ENCODE measurements at regions of chr3 and their contacts with region 1.

Region 1: DNA sequence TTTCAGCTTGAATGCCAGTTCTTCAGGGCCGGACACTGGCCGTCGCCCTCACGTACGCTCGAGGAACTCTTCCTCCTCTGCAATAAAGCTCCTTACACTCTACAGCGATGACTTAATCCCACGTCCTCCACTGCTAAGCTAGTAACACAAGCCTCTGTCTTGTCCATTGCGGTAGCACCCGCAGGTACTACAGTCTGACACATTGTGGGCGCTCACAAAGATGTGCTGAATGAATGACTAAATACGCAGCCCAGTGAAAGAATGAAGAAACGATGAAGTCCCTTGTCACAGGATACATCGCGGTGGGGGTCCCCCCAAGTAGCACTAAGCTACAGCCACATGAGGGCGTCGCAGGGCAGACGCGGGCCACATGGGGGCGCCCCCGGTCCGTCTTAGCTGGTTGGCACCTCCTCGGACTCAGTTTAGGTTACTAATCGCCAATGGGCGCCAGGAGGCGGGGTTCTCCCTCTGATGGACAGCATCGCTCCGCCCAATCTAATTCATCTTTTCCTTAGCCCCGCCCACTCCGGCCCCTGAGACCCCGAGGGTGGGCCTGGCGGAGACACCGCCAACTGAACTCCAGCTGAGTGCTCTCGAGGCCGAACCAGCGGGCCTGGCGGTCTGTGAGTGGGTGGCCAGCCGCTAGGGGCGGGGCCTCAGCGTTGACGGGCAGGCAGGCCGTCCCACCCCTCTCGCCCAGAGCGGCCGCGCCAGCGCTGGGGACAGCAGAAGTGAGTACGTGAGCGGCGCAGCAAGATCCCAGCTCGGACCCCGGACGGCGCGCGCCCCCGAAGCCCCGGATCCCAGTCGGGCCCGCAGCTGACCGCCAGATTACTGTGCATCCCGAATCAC is at the start of gene EPHB3:
- DNase-seq: peak; percentile 82
- ATAC-seq: peak; percentile 96
- H3K4me3 ChIP-seq: peak within 1 kb of the TSS; percentile 55 to 60
- H3K27ac ChIP-seq: no peak within 1 kb of the TSS
- H3K4me1 ChIP-seq: peaks cover 18% of the 10 kb centered on the region
- H3K27me3 ChIP-seq: peaks cover 2% of the 10 kb centered on the region; the same call in 1 of the 2 replicates
- CTCF ChIP-seq: peak; percentile 99
- total RNA-seq, gene EPHB3: 6.0 TPM

Region 2: GRCh38 chr3:184362668-184363540 is 198.4 kb before region 1 on chr3:
- CTCF ChIA-PET with region 1: no interaction called
- POLR2A ChIA-PET with region 1: interaction called, 10 read pairs
- in situ Hi-C with region 1: no loop called
- intact Hi-C with region 1: no loop called
- DNase-seq: peak; percentile 90
- ATAC-seq: peak; percentile 85
- H3K4me3 ChIP-seq: peak overlapping the region; percentile 86 to 98
- H3K27ac ChIP-seq: peak overlapping the region; percentile 91
- H3K4me1 ChIP-seq: peaks cover 13% of the 10 kb centered on the region
- H3K27me3 ChIP-seq: no peaks in the 10 kb centered on the region
- CTCF ChIP-seq: peak; percentile 87

Region 3: GRCh38 chr3:184583578-184584425 is 22.5 kb after region 1 on chr3:
- CTCF ChIA-PET with region 1: no interaction called
- POLR2A ChIA-PET with region 1: no interaction called
- in situ Hi-C with region 1: no loop called
- intact Hi-C with region 1: no loop called
- DNase-seq: no peak
- ATAC-seq: no peak
- H3K4me3 ChIP-seq: no peak overlapping the region
- H3K27ac ChIP-seq: no peak overlapping the region
- H3K4me1 ChIP-seq: no peaks in the 10 kb centered on the region
- H3K27me3 ChIP-seq: no peaks in the 10 kb centered on the region
- CTCF ChIP-seq: no peak

Region 4: DNA sequence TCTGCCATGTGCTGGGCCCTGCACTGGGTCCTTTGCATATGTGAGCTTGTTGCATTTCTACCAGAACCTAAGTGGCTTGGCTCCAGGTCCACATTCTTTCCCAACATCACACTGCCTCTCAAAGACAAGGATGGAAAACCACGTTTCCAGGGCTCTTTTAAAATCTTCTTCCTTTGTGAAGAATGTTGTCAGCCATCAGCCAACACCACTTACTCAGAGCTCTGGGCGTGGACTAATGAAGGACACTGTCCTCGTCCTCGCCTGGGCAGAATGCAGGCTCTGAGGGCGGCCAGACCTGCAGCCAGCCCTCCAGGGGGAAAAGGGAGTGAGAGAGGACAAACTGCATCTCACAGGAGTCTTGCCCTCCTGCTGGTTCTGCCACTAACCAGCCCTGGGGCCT is 100.9 kb after region 1 on chr3:
- CTCF ChIA-PET with region 1: no interaction called
- POLR2A ChIA-PET with region 1: no interaction called
- in situ Hi-C with region 1: no loop called
- intact Hi-C with region 1: no loop called
- DNase-seq: no peak
- ATAC-seq: no peak
- H3K4me3 ChIP-seq: no peak overlapping the region
- H3K27ac ChIP-seq: no peak overlapping the region
- H3K4me1 ChIP-seq: no peaks in the 10 kb centered on the region
- H3K27me3 ChIP-seq: no peaks in the 10 kb centered on the region
- CTCF ChIP-seq: no peak

Region 5: DNA sequence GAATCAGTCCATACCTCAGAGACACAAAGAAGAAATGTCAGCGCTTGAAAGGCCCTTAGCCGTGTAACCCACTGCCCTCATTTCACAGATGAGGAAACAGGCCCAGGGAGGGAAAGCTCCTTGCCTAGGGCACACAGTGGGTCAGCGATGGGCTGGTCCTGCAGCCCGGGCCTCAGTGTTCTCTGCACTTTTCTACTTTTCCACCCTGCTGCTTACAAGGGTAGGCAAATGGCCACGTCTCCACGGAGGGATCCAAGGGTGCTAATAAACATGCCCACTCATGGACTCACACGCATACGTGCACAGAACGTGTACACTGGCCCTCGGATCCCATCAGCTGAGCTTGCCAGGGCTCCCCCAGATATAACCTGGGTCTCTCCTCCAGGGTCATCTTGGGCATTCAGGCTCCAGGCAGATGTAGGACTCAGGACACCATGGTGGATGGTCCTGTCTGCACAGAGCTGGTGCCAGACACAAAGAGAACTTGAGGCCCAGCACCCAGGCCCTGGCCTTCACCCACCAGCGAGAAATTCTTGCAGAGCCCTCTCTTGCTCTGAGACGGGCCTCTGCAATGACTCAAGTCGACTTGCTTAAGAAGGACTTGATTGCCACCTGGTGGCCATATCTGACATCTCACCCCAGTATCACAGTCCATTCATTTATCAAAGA is 216.2 kb after region 1 on chr3:
- CTCF ChIA-PET with region 1: interaction called, 9 read pairs
- POLR2A ChIA-PET with region 1: interaction called, 5 read pairs
- in situ Hi-C with region 1: no loop called
- intact Hi-C with region 1: loop called (anchors 1 kb)
- DNase-seq: peak; percentile 71
- ATAC-seq: peak; percentile 93
- H3K4me3 ChIP-seq: no peak overlapping the region
- H3K27ac ChIP-seq: no peak overlapping the region
- H3K4me1 ChIP-seq: no peaks in the 10 kb centered on the region
- H3K27me3 ChIP-seq: 0 out of 2 replicates have a peak, but pooled peaks cover 4% of the 10 kb centered on the region
- CTCF ChIP-seq: peak; percentile 85

Region 6: DNA sequence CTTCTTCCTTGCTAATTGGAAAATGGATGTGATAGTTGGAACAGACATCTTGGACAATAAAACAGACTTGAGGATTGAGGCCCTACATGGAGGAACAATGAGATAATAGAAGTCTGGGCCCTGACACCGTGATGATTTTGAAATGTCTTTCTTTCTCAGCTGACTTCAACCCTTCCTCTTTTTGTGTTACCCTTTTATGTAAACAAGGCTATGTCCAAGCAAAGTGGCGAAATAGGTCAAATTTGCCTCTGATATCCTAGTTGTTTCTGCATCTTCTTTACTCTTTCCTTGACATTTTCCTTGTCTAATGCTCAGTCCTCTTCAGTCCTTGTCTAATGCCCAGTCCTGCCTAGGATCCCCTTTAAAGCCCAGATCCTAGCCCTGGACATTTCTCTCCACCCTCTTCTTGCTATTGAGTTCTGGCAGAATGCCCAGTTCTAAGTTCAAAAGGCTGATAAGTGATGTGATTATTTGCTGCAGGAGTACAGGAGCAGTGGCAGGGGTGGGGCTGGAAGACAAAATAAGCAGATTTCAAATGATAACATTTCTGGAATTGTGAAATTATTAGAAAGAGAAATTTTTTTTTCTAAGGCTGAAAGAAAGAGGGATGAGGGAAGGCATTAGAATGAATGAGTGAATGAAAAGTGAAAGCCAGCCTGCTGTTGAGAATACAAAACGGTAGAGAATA is 244.2 kb after region 1 on chr3:
- CTCF ChIA-PET with region 1: interaction called, 10 read pairs
- POLR2A ChIA-PET with region 1: no interaction called
- in situ Hi-C with region 1: no loop called
- intact Hi-C with region 1: no loop called
- DNase-seq: no peak
- ATAC-seq: no peak
- H3K4me3 ChIP-seq: no peak overlapping the region
- H3K27ac ChIP-seq: no peak overlapping the region
- H3K4me1 ChIP-seq: no peaks in the 10 kb centered on the region
- H3K27me3 ChIP-seq: peaks cover 9% of the 10 kb centered on the region
- CTCF ChIP-seq: no peak